ENCODE measurements at regions of chr7 and their contacts with region 1.

Region 1: DNA sequence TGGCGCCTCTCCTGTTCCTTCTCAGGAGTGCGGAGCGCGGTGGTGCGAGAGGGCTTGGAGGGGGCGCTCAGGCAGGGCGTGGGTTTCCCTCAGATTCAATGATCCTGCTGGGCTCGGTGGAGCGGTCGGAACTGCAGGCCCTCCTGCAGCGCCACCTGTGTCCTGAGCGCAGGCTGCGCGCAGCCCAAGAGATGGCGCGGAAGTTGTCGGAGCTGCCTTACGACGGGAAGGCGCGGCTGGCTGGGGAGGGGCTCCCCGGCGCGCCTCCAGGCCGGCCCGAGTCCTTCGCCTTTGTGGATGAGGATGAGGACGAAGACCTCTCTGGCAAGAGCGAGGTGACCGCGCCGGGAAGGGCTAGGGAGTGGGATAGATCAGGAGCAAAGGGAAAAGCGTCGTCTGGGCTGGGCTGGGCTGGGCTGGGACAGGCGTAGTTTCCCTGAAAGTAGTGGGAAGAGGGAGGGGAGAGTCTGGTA is 17.0 kb downstream of the FAM131B start:
- DNase-seq: peak; percentile 82
- H3K4me3 ChIP-seq: peak overlapping the region; percentile 15 to 55 (median 27); a peak in 5 of 8 replicates
- H3K27ac ChIP-seq: no peak overlapping the region
- H3K4me1 ChIP-seq: peaks cover 0 to 6% (median 3%) of the 10 kb centered on the region in 4 experiments; a peak in 3 of 7 replicates
- H3K27me3 ChIP-seq: peaks cover 0 to 3% (median 0%) of the 10 kb centered on the region in 4 experiments; a peak in 2 of 7 replicates
- CTCF ChIP-seq: peak; percentile 56 to 68 (median 60)
- EP300 ChIP-seq: peak in 1 of 2 experiments; percentile 29; a peak in 1 of 3 replicates
- POLR2A ChIP-seq: no peak
- RAD21 ChIP-seq: peak; percentile 19 to 47; a peak in 3 of 4 replicates

Region 2: DNA sequence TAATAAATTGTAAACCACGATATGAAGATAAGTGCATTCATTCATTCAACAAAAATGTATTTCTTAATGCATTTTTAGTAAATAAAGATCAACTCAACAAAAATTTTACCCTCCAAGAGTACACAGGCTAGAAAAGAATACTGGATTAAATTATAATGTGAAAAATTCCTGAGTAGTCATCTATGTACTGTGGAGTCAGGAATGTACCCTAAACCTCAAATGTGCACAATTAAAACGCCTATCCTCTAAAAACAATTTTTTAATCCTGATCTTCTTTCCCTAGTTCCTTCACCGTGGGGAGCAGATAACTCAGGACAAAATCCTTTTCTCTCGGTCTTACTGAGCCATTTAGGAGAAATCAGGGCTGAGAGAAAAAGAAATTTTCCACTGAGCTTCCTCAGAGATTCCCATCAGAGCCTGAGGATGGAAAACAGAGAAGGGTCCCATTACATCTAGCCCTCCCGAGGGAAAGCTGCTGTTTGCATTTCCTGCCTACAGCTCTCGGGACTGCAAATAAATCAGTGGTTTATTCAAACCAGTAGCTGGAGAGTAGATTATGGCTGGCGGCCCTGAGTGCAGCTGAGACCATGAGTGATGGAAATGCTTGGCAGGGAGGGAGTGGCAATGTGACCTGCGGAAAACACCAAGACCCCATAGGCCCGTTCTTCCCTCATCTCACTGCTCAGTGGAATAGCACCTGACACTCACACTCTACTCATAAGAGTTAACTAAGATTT is 116.2 kb before region 1 on chr7:
- CTCF ChIA-PET with region 1: no interaction called
- POLR2A ChIA-PET with region 1: no interaction called
- DNase-seq: no peak
- H3K4me3 ChIP-seq: no peak overlapping the region
- H3K27ac ChIP-seq: no peak overlapping the region
- H3K4me1 ChIP-seq: peaks cover 0 to 2% (median 0%) of the 10 kb centered on the region in 4 experiments; a peak in 1 of 7 replicates
- H3K27me3 ChIP-seq: no peaks in the 10 kb centered on the region
- CTCF ChIP-seq: no peak
- EP300 ChIP-seq: no peak
- POLR2A ChIP-seq: no peak
- RAD21 ChIP-seq: no peak

Region 3: GRCh38 chr7:143305423-143306070 is 39.9 kb before region 1 on chr7:
- CTCF ChIA-PET with region 1: interaction called, 11 read pairs
- POLR2A ChIA-PET with region 1: interaction called, 4 read pairs
- DNase-seq: peak in 1 of 2 experiments; percentile 88
- H3K4me3 ChIP-seq: no peak overlapping the region
- H3K27ac ChIP-seq: no peak overlapping the region
- H3K4me1 ChIP-seq: no peaks in the 10 kb centered on the region
- H3K27me3 ChIP-seq: no peaks in the 10 kb centered on the region
- CTCF ChIP-seq: peak; percentile 91 to 99 (median 96)
- EP300 ChIP-seq: no peak
- POLR2A ChIP-seq: no peak
- RAD21 ChIP-seq: peak; percentile 73 to 82

Region 4: GRCh38 chr7:143331179-143331820 is 14.2 kb before region 1 on chr7:
- CTCF ChIA-PET with region 1: interaction called, 32 read pairs
- POLR2A ChIA-PET with region 1: interaction called, 5 read pairs
- DNase-seq: no peak
- H3K4me3 ChIP-seq: no peak overlapping the region
- H3K27ac ChIP-seq: no peak overlapping the region
- H3K4me1 ChIP-seq: no peaks in the 10 kb centered on the region
- H3K27me3 ChIP-seq: no peaks in the 10 kb centered on the region
- CTCF ChIP-seq: no peak
- EP300 ChIP-seq: no peak
- POLR2A ChIP-seq: no peak
- RAD21 ChIP-seq: no peak

Region 5: GRCh38 chr7:143362131-143363015 is 16.9 kb after region 1 on chr7 and contains the start of gene FAM131B:
- CTCF ChIA-PET with region 1: interaction called, 17 read pairs
- POLR2A ChIA-PET with region 1: interaction called, 10 read pairs
- DNase-seq: peak in 1 of 2 experiments; percentile 76
- H3K4me3 ChIP-seq: peak within 1 kb of the TSS; percentile 80 to 98 (median 80)
- H3K27ac ChIP-seq: no peak within 1 kb of the TSS
- H3K4me1 ChIP-seq: peaks cover 4 to 12% (median 10%) of the 10 kb centered on the region in 4 experiments
- H3K27me3 ChIP-seq: peaks cover 0 to 13% (median 8%) of the 10 kb centered on the region in 4 experiments; a peak in 4 of 7 replicates
- CTCF ChIP-seq: no peak
- EP300 ChIP-seq: no peak
- POLR2A ChIP-seq: no peak
- RAD21 ChIP-seq: no peak
- total RNA-seq, gene FAM131B: 35.5 and 38.2 TPM in 2 replicates

Region 6: DNA sequence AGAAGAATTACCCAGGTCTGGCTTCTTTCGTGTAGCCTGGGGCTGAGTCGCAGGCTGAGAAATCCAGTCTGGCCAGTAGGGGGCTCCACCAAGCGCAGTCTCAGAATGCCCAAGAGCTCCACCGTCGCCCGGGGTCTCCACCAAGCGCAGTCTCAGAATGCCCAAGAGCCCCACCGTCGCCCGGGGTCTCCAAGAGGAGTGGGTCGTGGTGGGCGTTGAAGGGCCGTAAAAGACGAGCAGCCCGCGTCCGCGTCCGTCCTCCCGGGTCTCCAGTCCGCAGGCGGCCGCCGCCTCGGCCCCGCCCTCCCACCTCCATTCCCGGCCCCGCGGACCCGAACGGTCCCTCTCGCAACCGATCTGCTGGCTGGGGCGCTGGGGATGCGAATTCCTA is 34.8 kb after region 1 on chr7:
- CTCF ChIA-PET with region 1: interaction called, 25 read pairs
- POLR2A ChIA-PET with region 1: interaction called, 12 read pairs
- DNase-seq: peak; percentile 50 to 96
- H3K4me3 ChIP-seq: peak overlapping the region; percentile 76 to 100 (median 88)
- H3K27ac ChIP-seq: peak overlapping the region; percentile 93
- H3K4me1 ChIP-seq: peaks cover 5 to 17% (median 6%) of the 10 kb centered on the region in 4 experiments
- H3K27me3 ChIP-seq: no peaks in the 10 kb centered on the region
- CTCF ChIP-seq: peak in 2 of 3 experiments; percentile 74 to 75; a peak in 3 of 4 replicates
- EP300 ChIP-seq: no peak
- POLR2A ChIP-seq: no peak; a peak in 2 of 3 replicates
- RAD21 ChIP-seq: peak; percentile 37 to 57

Region 7: GRCh38 chr7:143408686-143409561 is 63.5 kb after region 1 on chr7 and contains the start of gene EPHA1:
- CTCF ChIA-PET with region 1: interaction called, 50 read pairs
- POLR2A ChIA-PET with region 1: interaction called, 7 read pairs
- DNase-seq: peak; percentile 50 to 83
- H3K4me3 ChIP-seq: peak within 1 kb of the TSS; percentile 86 to 91 (median 88)
- H3K27ac ChIP-seq: peak within 1 kb of the TSS; percentile 71
- H3K4me1 ChIP-seq: peaks cover 18 to 42% (median 31%) of the 10 kb centered on the region in 4 experiments
- H3K27me3 ChIP-seq: no peaks in the 10 kb centered on the region
- CTCF ChIP-seq: peak; percentile 47 to 72 (median 58)
- EP300 ChIP-seq: peak in 1 of 2 experiments; percentile 39; a peak in 1 of 3 replicates
- POLR2A ChIP-seq: peak in 1 of 2 experiments; percentile 34; a peak in 1 of 3 replicates
- RAD21 ChIP-seq: peak; percentile 47 to 57
- total RNA-seq, gene EPHA1: 133 and 139 TPM in 2 replicates

Region 8: GRCh38 chr7:143454076-143454680 is 108.7 kb after region 1 on chr7:
- CTCF ChIA-PET with region 1: no interaction called
- POLR2A ChIA-PET with region 1: no interaction called
- DNase-seq: no peak
- H3K4me3 ChIP-seq: no peak overlapping the region
- H3K27ac ChIP-seq: no peak overlapping the region
- H3K4me1 ChIP-seq: peaks cover 0 to 2% (median 0%) of the 10 kb centered on the region in 4 experiments; a peak in 1 of 7 replicates
- H3K27me3 ChIP-seq: no peaks in the 10 kb centered on the region
- CTCF ChIP-seq: no peak
- EP300 ChIP-seq: no peak
- POLR2A ChIP-seq: no peak
- RAD21 ChIP-seq: no peak